ENCODE measurements at regions of chr3 and their contacts with region 1.

Region 1: DNA sequence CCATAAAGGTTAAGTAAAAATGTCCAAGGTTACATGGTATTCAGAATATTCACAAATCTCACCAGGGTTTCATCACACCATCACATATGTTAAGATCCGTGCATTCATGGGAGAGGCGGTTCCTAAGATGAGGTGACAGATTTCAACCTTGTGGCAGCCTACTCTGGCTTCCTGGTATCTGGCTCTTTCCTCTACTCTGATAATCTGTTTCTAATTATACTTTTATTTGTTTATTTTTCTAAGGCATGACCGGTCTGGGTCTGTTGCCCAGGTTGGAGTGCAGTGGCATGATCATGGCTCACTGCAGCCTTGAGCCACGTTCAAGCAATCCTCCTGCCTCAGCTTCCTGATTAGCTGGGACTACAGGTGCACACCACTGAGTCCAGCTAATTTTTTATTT is 34.4 kb downstream of the RAF1 start:
- DNase-seq: no peak
- CTCF ChIP-seq: no peak

Region 2: DNA sequence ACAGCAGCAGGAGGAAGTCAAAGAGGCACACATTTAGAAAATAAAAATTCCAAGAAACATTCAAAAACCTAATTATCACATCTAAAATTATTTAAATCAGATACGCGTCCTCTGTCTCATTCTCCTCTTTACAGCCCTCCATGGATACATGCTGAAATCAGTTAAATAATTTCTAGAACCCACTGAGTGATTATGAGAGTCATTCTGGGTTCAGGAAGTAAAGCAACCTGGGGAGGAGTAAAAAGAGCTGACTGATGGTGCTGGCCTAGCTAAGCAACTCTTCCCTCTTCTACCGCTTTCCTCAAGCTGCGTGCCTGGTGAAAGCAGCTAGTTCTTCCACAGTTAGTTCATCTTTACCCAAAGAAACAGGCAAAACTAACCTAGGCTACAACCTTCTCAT is 14.3 kb before region 1 on chr3:
- CTCF ChIA-PET with region 1: interaction called, 11 read pairs
- POLR2A ChIA-PET with region 1: no interaction called
- DNase-seq: no peak
- CTCF ChIP-seq: no peak

Region 3: DNA sequence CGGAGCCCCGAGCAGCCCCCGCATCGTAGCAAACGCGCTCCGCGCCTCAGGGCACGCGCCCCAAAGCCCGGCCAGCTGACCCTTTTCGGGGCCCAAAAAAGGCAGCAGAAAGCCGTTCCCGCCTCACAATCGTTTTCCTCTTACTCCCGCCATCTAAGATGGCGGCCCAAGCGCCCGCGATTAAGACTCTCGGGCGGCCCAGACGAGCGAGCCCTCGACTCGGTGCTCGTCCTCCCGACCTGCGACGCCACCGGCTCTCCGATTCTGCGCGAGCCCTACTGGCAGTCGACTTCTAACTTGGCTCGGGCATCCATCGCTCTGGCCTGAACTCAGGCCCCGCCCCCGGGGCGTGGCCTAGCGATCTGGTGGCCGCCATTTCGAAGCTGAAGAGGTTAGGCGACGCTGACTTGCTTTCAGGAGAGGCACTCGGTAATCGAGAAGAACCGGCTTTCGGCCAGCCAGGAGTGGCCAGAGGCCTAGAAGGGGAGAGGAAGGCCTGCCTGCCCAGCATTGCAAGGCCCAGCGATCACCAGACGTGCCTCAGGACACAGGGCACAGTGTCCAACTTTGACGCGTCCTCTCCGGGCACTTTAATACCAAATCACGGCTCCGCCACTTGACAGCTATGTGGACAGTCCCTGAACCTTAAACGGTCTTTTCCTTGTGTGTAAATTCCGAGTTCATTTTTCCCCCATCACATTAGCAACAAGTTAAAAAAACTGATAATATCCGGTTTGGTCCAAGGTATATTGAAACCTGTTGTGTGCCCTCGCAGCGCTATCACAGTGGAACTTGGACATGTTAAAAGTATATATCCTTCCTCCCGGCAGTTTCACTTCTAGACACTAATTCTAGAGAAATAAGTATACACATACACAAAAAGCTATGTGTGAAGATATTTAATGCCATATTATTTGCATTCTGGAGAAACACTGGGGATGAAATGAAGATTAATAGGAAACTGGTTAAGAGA is 34.7 kb after region 1 on chr3 and contains the start of gene RAF1:
- CTCF ChIA-PET with region 1: no interaction called
- POLR2A ChIA-PET with region 1: no interaction called
- DNase-seq: peak; percentile 98
- CTCF ChIP-seq: no peak

Measured in GM10248 (cell line).